Aorta (tissue), 5 donors: ENCODE measurements at regions of chr10 and their contacts with region 1.

Region 1: DNA sequence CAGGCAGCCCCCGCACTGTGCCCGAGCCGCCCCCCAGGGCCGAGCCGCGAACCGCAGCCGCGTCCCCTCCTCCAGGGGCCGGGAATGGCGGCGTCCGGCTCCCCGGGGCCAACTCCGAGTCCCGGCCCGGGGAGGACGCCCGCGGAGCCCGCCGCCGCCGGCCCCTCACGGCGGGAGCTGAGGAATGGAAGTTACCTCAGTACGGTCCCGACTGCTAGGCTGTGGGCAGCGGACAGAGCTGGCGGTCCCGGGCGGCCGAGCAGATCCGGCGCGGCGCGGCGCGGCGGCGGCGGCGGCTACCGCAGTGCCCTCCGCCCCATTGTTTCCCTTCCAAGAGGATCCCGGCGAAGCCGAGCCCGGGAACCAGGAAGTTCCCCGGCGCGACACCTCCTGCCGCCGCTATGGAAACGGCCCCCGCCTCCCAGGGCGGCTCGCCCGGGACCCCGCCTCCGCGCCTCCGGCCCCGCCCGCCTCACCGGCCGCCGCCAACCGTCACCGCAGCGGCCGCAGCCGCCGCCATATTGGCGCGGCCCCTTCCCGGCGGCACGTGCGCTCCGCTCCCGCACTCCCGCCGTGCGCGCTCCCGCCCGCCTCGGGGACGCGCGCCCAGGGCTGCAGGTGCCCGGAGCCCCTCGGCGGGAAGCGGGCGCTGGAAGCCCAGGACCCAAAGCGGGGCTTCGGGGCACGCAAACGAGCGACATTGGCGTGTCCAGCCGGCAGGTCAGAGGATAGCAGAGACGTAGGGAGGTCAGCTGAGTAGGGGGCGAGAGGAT is at the start of gene USP6NL:
- DNase-seq: peak; percentile 92 to 97
- ATAC-seq: peak; percentile 95
- H3K4me3 ChIP-seq: peak within 1 kb of the TSS; percentile 95 to 98
- H3K27ac ChIP-seq: peak within 1 kb of the TSS; percentile 72 to 91
- H3K4me1 ChIP-seq: peaks cover 0 to 7% of the 10 kb centered on the region in 2 donors
- H3K27me3 ChIP-seq: no peaks in the 10 kb centered on the region
- total RNA-seq, gene USP6NL: 11.3 to 12.5 TPM

Region 2: DNA sequence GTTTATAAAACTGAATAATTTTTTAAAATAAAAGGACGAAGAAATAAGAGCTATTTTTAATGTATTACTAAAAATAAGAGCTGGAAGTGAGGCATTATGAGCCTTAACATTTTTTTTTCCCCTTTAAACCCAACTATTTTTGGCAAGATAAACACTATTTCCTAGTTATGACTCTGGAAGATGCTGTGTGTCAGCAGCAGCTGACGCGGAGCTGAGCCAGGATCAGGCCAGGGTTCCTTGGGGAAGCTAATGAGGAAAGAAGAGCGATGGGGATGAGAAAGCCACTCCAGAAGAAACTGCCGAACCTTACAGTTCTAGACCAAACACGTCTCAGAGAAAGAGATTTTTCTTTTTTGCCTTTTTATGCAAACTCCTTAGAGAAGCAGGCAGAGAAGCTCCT is 85.9 kb before region 1 on chr10:
- intact Hi-C with region 1: loop called (anchors 5 kb)
- DNase-seq: peak; percentile 88 to 89
- ATAC-seq: peak; percentile 91
- H3K4me3 ChIP-seq: peak overlapping the region in 1 of 2 donors; percentile 34
- H3K27ac ChIP-seq: peak overlapping the region in 1 of 2 donors; percentile 64
- H3K4me1 ChIP-seq: peaks cover 0 to 2% of the 10 kb centered on the region in 2 donors
- H3K27me3 ChIP-seq: no peaks in the 10 kb centered on the region

Region 3: DNA sequence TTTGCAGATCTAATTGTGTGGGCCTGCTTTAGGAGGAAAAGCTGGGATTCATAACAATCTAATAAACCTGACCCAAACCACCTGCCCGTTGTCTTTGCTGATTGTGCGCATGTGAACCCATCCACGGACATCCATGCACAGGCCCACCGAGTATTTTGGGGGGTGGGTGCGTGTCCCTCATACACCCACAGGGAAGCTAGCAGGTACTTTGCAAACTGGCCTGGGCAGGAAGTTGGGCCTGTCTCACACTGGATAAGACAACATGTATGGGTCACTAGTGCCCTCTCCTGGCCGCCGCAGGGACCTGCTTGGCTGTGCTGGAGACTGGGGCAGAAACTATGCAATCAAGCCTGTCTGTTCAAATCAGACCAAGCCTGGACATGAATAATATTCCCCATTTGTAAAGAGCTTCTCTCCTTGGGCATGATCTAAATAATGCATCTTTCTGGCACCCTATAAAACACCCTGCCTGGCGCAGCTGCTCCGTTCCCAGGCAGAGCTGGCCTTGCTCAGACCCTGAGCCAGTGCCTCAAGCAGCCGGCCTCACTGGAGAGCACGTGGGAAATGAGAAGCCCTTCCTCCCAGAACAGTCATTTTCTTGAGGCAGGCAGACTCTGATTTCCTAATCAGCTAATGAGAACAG is 146.5 kb after region 1 on chr10:
- intact Hi-C with region 1: loop called (anchors 5 to 10 kb)
- DNase-seq: peak; percentile 91 to 95
- ATAC-seq: peak; percentile 91
- H3K4me3 ChIP-seq: no peak overlapping the region
- H3K27ac ChIP-seq: peak overlapping the region in 1 of 2 donors; percentile 22
- H3K4me1 ChIP-seq: no peaks in the 10 kb centered on the region
- H3K27me3 ChIP-seq: no peaks in the 10 kb centered on the region

Region 4: GRCh38 chr10:11962176-11962575 is 350.7 kb after region 1 on chr10:
- intact Hi-C with region 1: no loop called
- DNase-seq: no peak
- ATAC-seq: no peak
- H3K4me3 ChIP-seq: no peak overlapping the region
- H3K27ac ChIP-seq: no peak overlapping the region
- H3K4me1 ChIP-seq: no peaks in the 10 kb centered on the region
- H3K27me3 ChIP-seq: no peaks in the 10 kb centered on the region